Colonic mucosa (tissue), 4 donors: ENCODE measurements at regions of chr6 and their contacts with region 1.

Region 1: DNA sequence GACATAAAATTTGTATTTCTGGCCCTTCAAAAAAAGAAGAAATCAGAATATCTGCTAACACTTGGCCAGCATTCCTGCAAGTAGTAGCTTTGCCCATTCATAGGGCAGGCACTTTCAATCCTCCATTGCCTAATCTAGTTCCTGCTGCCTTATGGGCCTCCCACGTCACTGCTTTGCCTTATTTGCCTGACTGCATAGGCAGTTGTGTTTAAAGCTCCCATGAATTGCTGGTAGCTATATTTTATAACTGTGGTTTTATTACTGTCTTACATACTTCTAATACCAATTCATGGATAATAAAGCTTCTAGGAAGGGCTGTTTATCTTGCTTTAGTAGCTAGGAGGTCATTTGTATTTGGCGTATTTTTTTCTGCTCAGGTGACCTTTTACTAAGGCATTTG is 7.7 kb upstream of the SLC35A1 start:
- DNase-seq: peak; percentile 42
- H3K4me3 ChIP-seq: no peak overlapping the region
- H3K27ac ChIP-seq: no peak overlapping the region
- H3K4me1 ChIP-seq: no peaks in the 10 kb centered on the region
- H3K27me3 ChIP-seq: no peaks in the 10 kb centered on the region
- CTCF ChIP-seq: no peak

Region 2: DNA sequence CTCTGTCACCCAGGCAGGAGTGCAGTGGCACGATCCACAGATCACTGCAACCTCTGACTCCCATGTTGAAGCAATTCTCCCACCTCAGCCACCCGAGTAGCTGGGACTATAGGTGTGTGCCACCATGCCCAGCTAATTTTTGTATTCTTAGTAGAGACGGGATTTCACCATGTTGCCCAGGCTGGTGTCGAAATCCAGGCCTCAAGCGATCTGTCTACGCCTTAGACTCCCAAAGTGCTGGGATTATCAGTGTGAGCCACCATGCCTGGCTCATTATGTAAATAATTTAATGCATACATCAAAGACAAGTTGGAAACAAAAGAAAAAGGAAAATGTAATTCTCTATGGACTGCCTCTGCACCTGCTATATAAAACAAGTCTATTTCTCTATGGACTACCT is 50.7 kb before region 1 on chr6:
- intact Hi-C with region 1: loop called (anchors 10 kb)
- DNase-seq: no peak
- H3K4me3 ChIP-seq: no peak overlapping the region
- H3K27ac ChIP-seq: no peak overlapping the region
- H3K4me1 ChIP-seq: no peaks in the 10 kb centered on the region
- H3K27me3 ChIP-seq: no peaks in the 10 kb centered on the region
- CTCF ChIP-seq: no peak